PC-9 (cell line): ENCODE measurements at regions of chr12 and their contacts with region 1.

Region 1: GRCh38 chr12:3041558-3042164 is 35.5 kb upstream of the TSPAN9 start:
- DNase-seq: peak; percentile 73 to 76
- H3K4me3 ChIP-seq: no peak overlapping the region
- H3K27ac ChIP-seq: no peak overlapping the region
- H3K4me1 ChIP-seq: no peaks in the 10 kb centered on the region
- H3K27me3 ChIP-seq: no peaks in the 10 kb centered on the region
- CTCF ChIP-seq: peak; percentile 87

Region 2: GRCh38 chr12:2739817-2740641 is 301.6 kb before region 1 on chr12:
- CTCF ChIA-PET with region 1: interaction called, 4 read pairs
- POLR2A ChIA-PET with region 1: no interaction called
- intact Hi-C with region 1: loop called (anchors 1 kb)
- DNase-seq: peak; percentile 15 to 52
- H3K4me3 ChIP-seq: no peak overlapping the region
- H3K27ac ChIP-seq: no peak overlapping the region
- H3K4me1 ChIP-seq: no peaks in the 10 kb centered on the region
- H3K27me3 ChIP-seq: peaks cover 79% of the 10 kb centered on the region
- CTCF ChIP-seq: peak; percentile 86